ENCODE measurements at regions of chr2 and their contacts with region 1.

Region 1: DNA sequence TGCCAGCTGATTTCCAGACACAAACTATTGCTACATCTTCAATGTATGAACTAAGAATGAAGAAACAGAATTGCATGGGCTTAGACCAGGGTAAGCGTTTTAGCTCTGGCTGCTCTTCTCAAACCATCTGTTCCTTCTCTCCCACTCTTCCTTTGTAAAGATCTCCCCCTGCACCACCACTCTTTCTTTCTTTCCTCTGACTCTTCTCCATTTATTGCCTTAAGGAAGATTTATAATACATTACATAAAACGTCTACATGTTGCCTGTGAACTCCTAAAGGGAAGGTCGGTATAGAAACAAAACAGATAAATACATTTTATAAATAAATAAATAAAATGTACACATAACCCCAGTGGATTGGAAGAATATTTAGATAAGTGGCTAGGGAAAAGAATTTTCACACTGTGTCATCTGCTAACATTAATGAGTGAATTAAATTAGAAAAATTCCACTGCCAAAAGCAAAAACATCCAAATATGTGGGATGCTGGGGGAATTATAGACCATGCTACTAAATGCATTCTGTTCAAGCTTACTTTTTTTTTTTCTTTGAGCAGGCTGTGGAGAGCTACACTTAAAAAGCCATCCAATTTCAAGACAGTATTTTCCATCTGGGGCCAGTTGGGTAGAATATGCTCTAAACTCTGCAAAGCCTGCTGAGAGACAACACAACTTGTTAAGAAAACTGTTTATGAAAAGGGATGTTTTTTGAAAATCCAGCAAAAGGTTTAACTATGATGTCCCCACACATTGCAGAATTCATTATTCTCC is 41.5 kb downstream of the NCKAP5 start:
- DNase-seq: no peak
- ATAC-seq: no peak
- H3K4me3 ChIP-seq: no peak overlapping the region
- H3K27ac ChIP-seq: no peak overlapping the region
- H3K4me1 ChIP-seq: no peaks in the 10 kb centered on the region
- H3K27me3 ChIP-seq: no peaks in the 10 kb centered on the region
- CTCF ChIP-seq: no peak
- EP300 ChIP-seq: no peak
- POLR2A ChIP-seq: no peak
- RAD21 ChIP-seq: no peak

Region 2: DNA sequence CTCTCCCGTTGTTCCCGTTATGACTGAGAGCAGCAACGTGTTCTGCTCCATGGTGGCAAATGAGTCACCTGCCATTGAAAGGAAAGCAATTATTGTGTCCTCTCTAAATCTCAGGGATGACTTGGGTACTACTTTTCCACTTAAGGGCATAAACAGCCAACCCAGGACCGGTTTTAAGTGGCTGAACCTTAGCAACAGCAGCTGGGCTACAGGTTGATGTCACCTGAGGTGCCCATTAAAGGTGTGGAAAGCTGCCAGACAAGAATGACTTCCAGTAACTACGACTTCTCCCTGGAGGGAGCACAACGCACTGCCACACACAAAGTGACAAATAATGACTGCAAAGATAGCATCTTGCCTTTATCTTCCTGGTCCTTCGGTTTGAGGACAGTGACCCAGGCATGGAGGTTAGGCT is 195.2 kb before region 1 on chr2:
- CTCF ChIA-PET with region 1: no interaction called
- POLR2A ChIA-PET with region 1: no interaction called
- RAD21 ChIA-PET with region 1: no interaction called
- SMC1A ChIA-PET with region 1: no interaction called
- in situ Hi-C with region 1: no loop called
- intact Hi-C with region 1: no loop called
- DNase-seq: no peak
- ATAC-seq: no peak
- H3K4me3 ChIP-seq: no peak overlapping the region
- H3K27ac ChIP-seq: no peak overlapping the region
- H3K4me1 ChIP-seq: no peaks in the 10 kb centered on the region
- H3K27me3 ChIP-seq: no peaks in the 10 kb centered on the region
- CTCF ChIP-seq: no peak
- EP300 ChIP-seq: no peak
- POLR2A ChIP-seq: no peak
- RAD21 ChIP-seq: no peak

Region 3: DNA sequence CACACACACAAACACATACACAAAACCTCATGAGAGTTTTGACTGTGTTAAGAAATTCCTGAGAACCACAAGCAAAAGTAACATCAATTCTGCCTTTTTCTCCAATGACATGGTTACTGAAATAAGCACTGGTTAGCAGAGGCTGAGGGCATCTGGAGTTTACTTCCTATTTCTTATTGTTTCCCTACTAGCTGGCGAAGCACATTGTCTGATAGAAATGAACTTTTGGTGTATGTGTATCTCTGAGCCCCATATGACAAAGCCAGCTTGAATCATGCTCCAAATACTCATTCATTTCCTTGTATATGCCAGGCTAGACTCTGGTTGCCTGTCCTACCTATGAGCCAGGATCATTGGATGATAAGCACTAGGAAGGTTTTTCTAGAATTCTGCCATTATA is 161.6 kb before region 1 on chr2:
- CTCF ChIA-PET with region 1: no interaction called
- POLR2A ChIA-PET with region 1: no interaction called
- RAD21 ChIA-PET with region 1: no interaction called
- SMC1A ChIA-PET with region 1: no interaction called
- in situ Hi-C with region 1: no loop called
- intact Hi-C with region 1: no loop called
- DNase-seq: no peak
- ATAC-seq: no peak
- H3K4me3 ChIP-seq: no peak overlapping the region
- H3K27ac ChIP-seq: no peak overlapping the region
- H3K4me1 ChIP-seq: no peaks in the 10 kb centered on the region
- H3K27me3 ChIP-seq: no peaks in the 10 kb centered on the region
- CTCF ChIP-seq: no peak
- EP300 ChIP-seq: no peak
- POLR2A ChIP-seq: no peak
- RAD21 ChIP-seq: no peak

Region 4: DNA sequence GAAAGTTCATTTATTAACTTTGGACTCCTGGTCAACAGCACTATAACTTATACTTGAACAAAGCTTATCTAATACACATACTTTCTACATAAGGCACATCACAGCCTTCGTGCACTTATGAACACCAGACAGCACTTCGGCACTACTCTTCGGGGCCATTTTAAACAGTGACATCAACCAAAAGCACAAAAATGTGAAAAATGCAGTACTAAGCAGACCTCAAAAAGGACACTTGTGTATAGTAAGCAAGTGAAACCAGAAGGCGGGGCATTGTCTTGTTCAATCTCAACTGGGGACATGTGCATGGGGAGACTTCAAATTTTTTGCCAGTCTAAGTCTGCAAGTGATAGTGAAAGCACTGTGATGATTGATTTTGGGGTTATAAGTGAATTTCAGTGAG is 121.5 kb before region 1 on chr2:
- CTCF ChIA-PET with region 1: no interaction called
- POLR2A ChIA-PET with region 1: no interaction called
- RAD21 ChIA-PET with region 1: no interaction called
- SMC1A ChIA-PET with region 1: no interaction called
- in situ Hi-C with region 1: no loop called
- intact Hi-C with region 1: no loop called
- DNase-seq: no peak
- ATAC-seq: peak; percentile 68
- H3K4me3 ChIP-seq: no peak overlapping the region
- H3K27ac ChIP-seq: no peak overlapping the region
- H3K4me1 ChIP-seq: no peaks in the 10 kb centered on the region
- H3K27me3 ChIP-seq: no peaks in the 10 kb centered on the region
- CTCF ChIP-seq: no peak
- EP300 ChIP-seq: no peak
- POLR2A ChIP-seq: no peak
- RAD21 ChIP-seq: no peak

Region 5: DNA sequence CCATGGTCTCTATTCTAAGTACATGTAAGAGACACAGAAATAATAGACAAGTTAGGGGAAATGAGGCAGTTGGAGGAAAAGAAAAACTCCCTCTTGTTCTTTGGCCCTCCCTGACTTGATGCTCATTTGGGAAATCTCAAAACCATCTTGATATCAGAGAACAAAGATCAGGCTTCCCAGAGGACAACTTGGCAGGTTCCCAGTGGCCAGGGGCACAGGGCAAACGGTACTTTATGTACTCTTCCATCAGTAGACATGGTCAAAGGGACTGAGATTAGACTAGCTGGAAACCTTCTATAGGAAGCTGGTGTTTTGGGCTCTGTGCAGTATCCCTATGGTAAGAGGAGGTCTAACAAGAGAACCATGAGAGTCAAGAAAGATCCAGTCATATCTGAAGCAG is 15.0 kb before region 1 on chr2:
- CTCF ChIA-PET with region 1: interaction called, 6 read pairs
- POLR2A ChIA-PET with region 1: no interaction called
- RAD21 ChIA-PET with region 1: no interaction called
- SMC1A ChIA-PET with region 1: interaction called, 14 read pairs
- in situ Hi-C with region 1: no loop called
- intact Hi-C with region 1: no loop called
- DNase-seq: no peak
- ATAC-seq: no peak
- H3K4me3 ChIP-seq: no peak overlapping the region
- H3K27ac ChIP-seq: no peak overlapping the region
- H3K4me1 ChIP-seq: no peaks in the 10 kb centered on the region
- H3K27me3 ChIP-seq: no peaks in the 10 kb centered on the region
- CTCF ChIP-seq: no peak
- EP300 ChIP-seq: no peak
- POLR2A ChIP-seq: no peak
- RAD21 ChIP-seq: no peak

Region 6: DNA sequence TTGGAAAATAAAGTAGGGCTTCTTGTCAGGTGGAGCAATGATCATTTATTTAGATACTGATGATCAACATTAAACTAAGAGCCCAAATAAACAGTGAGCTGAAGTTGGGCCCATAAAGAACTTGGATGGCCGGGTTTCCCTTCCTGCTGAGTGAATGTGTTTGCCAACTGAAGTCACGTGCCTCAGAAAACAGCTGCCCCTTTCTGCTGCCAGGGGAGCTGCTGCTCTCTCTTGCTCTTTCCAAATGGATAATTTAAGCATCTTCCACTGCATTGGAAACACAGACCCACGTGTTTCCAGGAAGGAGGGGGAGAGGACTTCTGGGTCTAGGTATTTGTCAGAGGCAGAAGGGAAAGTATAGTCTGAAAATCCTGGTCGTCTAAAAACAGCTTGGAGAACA is 64.4 kb after region 1 on chr2:
- CTCF ChIA-PET with region 1: no interaction called
- POLR2A ChIA-PET with region 1: no interaction called
- RAD21 ChIA-PET with region 1: no interaction called
- SMC1A ChIA-PET with region 1: no interaction called
- in situ Hi-C with region 1: no loop called
- intact Hi-C with region 1: no loop called
- DNase-seq: no peak
- ATAC-seq: no peak
- H3K4me3 ChIP-seq: no peak overlapping the region
- H3K27ac ChIP-seq: no peak overlapping the region
- H3K4me1 ChIP-seq: no peaks in the 10 kb centered on the region
- H3K27me3 ChIP-seq: no peaks in the 10 kb centered on the region; a peak in 2 of 4 replicates
- CTCF ChIP-seq: no peak
- EP300 ChIP-seq: no peak
- POLR2A ChIP-seq: no peak
- RAD21 ChIP-seq: no peak